ENCODE measurements at regions of chr1 and their contacts with region 1.

Region 1: DNA sequence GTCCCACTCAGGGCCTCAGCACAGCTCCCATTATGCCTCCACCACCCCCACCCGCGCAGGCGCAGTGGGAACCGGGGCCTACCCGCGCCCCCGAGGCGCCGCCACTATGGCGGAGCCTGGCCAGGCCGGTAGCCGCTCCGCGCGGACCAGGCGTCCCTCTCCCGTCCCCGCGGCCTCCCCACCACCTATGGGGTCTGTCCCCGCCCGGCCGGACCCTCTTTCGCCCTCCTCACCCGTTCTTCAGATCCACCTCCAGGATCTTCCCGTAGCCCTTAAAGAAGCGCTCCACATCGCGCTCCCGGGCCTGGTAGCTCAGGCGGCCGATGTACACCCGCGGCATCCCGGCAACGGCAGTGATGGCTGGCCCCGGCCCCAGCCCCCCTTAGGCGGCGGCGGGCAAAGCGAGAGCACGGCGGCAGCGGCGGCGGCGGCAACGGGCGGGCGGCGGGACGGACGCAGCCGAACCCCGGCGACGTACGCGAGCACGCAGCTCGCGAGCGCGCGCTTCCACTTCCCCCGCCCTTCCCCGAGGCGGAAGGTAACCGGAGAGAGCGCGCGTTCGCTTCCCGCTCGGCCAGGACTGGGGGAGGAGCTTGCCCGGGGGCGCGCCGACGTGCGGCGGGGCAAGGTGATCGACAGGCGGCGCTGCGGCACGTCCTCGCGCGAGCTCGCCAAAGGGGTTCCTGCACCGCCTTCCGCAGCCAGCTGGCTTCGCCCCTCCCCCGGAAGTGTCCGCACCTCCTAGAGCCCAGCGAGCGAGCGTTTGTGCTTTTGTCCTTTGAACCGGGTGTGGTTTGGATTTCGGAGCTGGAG is at the start of gene SRSF4:
- DNase-seq: peak; percentile 100
- ATAC-seq: peak; percentile 91
- H3K4me3 Mint-ChIP-seq: peak within 1 kb of the TSS; percentile 87
- H3K27ac Mint-ChIP-seq: peak within 1 kb of the TSS; percentile 99
- H3K4me1 Mint-ChIP-seq: peaks cover 39% of the 10 kb centered on the region
- H3K27me3 Mint-ChIP-seq: no peaks in the 10 kb centered on the region
- total RNA-seq, gene SRSF4: 129 to 147 TPM

Region 2: GRCh38 chr1:28329395-28330153 is 852.0 kb before region 1 on chr1:
- CTCF ChIA-PET with region 1: no interaction called
- POLR2A ChIA-PET with region 1: no interaction called
- intact Hi-C with region 1: loop called in 1 of 2 experiments (anchors 1 kb)
- DNase-seq: peak; percentile 61
- ATAC-seq: peak; percentile 19
- H3K4me3 Mint-ChIP-seq: peak overlapping the region; percentile 96
- H3K27ac Mint-ChIP-seq: peak overlapping the region; percentile 97
- H3K4me1 Mint-ChIP-seq: peaks cover 39% of the 10 kb centered on the region
- H3K27me3 Mint-ChIP-seq: no peaks in the 10 kb centered on the region

Region 3: GRCh38 chr1:28480308-28480707 is 701.3 kb before region 1 on chr1:
- CTCF ChIA-PET with region 1: no interaction called
- POLR2A ChIA-PET with region 1: no interaction called
- intact Hi-C with region 1: no loop called
- DNase-seq: no peak
- ATAC-seq: no peak
- H3K4me3 Mint-ChIP-seq: no peak overlapping the region
- H3K27ac Mint-ChIP-seq: no peak overlapping the region
- H3K4me1 Mint-ChIP-seq: no peaks in the 10 kb centered on the region
- H3K27me3 Mint-ChIP-seq: no peaks in the 10 kb centered on the region

Region 4: GRCh38 chr1:28642847-28643635 is 538.6 kb before region 1 on chr1 and contains the start of gene TAF12:
- CTCF ChIA-PET with region 1: no interaction called
- POLR2A ChIA-PET with region 1: interaction called, 15 read pairs
- intact Hi-C with region 1: loop called in 1 of 2 experiments (anchors 1 kb)
- DNase-seq: peak; percentile 95
- ATAC-seq: peak; percentile 81
- H3K4me3 Mint-ChIP-seq: peak within 1 kb of the TSS; percentile 98
- H3K27ac Mint-ChIP-seq: peak within 1 kb of the TSS; percentile 97
- H3K4me1 Mint-ChIP-seq: peaks cover 50% of the 10 kb centered on the region
- H3K27me3 Mint-ChIP-seq: no peaks in the 10 kb centered on the region
- total RNA-seq, gene TAF12: 23.8 to 32.5 TPM

Region 5: GRCh38 chr1:28886731-28887418 is 294.7 kb before region 1 on chr1:
- CTCF ChIA-PET with region 1: interaction called, 10 read pairs
- POLR2A ChIA-PET with region 1: no interaction called
- intact Hi-C with region 1: loop called (anchors 1 to 5 kb)
- DNase-seq: peak; percentile 95
- ATAC-seq: peak; percentile 77
- H3K4me3 Mint-ChIP-seq: peak overlapping the region; percentile 90
- H3K27ac Mint-ChIP-seq: peak overlapping the region; percentile 88
- H3K4me1 Mint-ChIP-seq: peaks cover 43% of the 10 kb centered on the region
- H3K27me3 Mint-ChIP-seq: no peaks in the 10 kb centered on the region

Region 6: DNA sequence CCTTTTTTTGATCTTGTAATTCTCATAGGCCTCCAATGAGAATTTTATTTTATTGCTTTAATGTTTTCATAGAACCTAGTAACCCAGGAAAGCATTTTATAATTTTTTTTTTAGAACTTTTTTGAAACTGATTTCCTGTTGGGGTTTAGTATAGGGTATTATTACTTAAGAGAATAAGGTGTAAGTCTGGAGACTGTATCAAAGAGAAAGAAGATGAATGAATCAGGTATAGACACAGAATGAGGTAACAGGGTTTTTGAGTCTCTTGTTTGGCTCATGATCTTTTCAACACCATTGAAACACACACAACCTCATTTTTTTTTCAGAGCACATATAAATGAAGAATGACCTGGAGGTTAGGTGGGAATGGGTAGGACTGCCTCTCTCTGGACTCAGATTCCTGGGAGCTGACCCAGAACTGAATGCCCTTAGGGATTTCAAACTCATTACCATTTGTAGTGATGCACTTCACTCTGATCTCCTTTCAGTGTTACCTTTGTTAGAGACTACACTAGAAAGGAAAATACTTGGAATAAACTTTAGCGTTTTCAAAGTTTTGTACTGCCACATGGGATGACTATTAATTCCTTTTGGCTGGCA is 216.2 kb before region 1 on chr1:
- CTCF ChIA-PET with region 1: no interaction called
- POLR2A ChIA-PET with region 1: no interaction called
- intact Hi-C with region 1: loop called (anchors 1 to 5 kb)
- DNase-seq: no peak
- ATAC-seq: peak; percentile 34
- H3K4me3 Mint-ChIP-seq: no peak overlapping the region
- H3K27ac Mint-ChIP-seq: peak overlapping the region; percentile 37
- H3K4me1 Mint-ChIP-seq: peaks cover 58% of the 10 kb centered on the region
- H3K27me3 Mint-ChIP-seq: no peaks in the 10 kb centered on the region

Region 7: GRCh38 chr1:29114654-29115053 is 67.0 kb before region 1 on chr1:
- CTCF ChIA-PET with region 1: no interaction called
- POLR2A ChIA-PET with region 1: no interaction called
- intact Hi-C with region 1: no loop called
- DNase-seq: no peak
- ATAC-seq: no peak
- H3K4me3 Mint-ChIP-seq: no peak overlapping the region
- H3K27ac Mint-ChIP-seq: no peak overlapping the region
- H3K4me1 Mint-ChIP-seq: peaks cover 5% of the 10 kb centered on the region
- H3K27me3 Mint-ChIP-seq: no peaks in the 10 kb centered on the region

Region 8: GRCh38 chr1:29230553-29231378 is 49.1 kb after region 1 on chr1 and contains the start of gene MECR:
- CTCF ChIA-PET with region 1: interaction called, 4 read pairs
- POLR2A ChIA-PET with region 1: interaction called, 6 read pairs
- intact Hi-C with region 1: loop called in 1 of 2 experiments (anchors 1 kb)
- DNase-seq: peak; percentile 97
- ATAC-seq: peak; percentile 97
- H3K4me3 Mint-ChIP-seq: peak within 1 kb of the TSS; percentile 94
- H3K27ac Mint-ChIP-seq: peak within 1 kb of the TSS; percentile 94
- H3K4me1 Mint-ChIP-seq: peaks cover 18% of the 10 kb centered on the region
- H3K27me3 Mint-ChIP-seq: peaks cover 9% of the 10 kb centered on the region
- total RNA-seq, gene MECR: 41.3 to 43.1 TPM